HCT116 (cell line): ENCODE measurements at regions of chr3 and their contacts with region 1.

Region 1: GRCh38 chr3:142595951-142596725 is at the start of gene PLS1:
- DNase-seq: peak; percentile 86
- ATAC-seq: peak; percentile 88
- H3K4me3 ChIP-seq: peak within 1 kb of the TSS; percentile 64 to 75
- H3K27ac ChIP-seq: peak within 1 kb of the TSS; percentile 78
- H3K4me1 ChIP-seq: peaks cover 20 to 28% of the 10 kb centered on the region in 2 experiments
- H3K27me3 ChIP-seq: no peaks in the 10 kb centered on the region
- CTCF ChIP-seq: no peak
- POLR2A ChIP-seq: peak; percentile 94
- RAD21 ChIP-seq: 0 out of 2 replicates have a peak, but pooled peaks have one; percentile 6
- total RNA-seq, gene PLS1: 38.8 TPM

Region 2: DNA sequence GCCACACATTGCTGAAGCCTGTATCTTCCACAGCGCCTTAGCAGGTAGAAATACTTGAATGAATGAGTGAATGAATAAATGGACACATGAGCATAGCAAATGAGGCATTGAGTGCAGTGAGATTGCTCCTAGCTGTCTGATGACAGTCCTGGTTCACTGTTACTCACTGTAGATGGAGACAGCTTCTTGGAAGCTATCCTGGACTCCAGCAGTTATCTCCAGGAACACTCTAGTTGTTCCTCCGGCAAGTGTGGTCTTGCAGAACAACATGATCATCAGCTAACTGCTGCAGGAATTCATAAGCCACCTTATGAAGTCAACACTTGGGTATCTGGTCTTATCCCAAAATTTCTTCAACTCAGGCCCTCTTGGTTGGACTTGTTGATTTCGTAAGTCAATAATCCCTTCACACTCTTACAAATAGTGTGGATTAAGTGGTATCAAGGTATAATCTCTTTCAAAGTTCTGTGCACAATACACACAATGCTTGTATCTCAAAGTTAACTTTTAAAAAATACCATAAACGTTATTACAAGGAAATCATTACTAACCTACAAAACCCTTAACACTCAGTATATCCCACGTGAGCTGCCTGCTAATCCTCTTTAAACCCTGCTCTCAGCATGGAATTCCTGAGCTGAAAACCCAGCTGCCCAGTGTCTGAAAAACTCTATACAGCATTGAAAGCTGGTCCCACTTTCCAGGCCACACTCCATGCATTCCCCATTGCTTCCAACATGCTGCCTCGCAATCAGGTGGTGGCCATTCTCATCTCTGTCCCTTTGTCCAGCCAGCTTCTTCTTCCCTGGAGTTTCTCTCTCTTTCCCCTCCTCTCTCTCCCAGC is 1242.3 kb before region 1 on chr3:
- CTCF ChIA-PET with region 1: no interaction called
- POLR2A ChIA-PET with region 1: no interaction called
- RAD21 ChIA-PET with region 1: no interaction called
- intact Hi-C with region 1: no loop called
- DNase-seq: no peak
- ATAC-seq: no peak
- H3K4me3 ChIP-seq: no peak overlapping the region
- H3K27ac ChIP-seq: no peak overlapping the region
- H3K4me1 ChIP-seq: no peaks in the 10 kb centered on the region
- H3K27me3 ChIP-seq: no peaks in the 10 kb centered on the region
- CTCF ChIP-seq: no peak
- POLR2A ChIP-seq: no peak
- RAD21 ChIP-seq: no peak

Region 3: DNA sequence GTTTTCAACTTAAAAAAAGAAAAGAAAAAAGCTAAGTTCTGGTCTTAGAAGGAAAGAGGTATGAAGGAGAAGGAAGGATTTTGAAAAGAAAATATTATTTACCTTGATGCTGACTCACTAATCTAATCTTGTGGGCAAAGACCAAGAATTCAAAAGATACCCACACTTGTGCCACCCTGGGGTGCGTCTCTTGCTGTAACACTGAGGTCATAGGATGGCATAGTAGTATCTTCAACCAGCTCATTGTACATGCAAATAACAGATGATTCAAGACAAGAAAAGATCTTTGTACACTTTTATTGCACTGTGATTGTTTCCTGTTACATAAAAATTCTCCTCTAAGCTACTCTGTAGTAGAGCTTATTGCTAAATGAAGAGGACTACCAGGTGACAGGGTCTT is 17.4 kb after region 1 on chr3:
- CTCF ChIA-PET with region 1: no interaction called
- POLR2A ChIA-PET with region 1: no interaction called
- RAD21 ChIA-PET with region 1: no interaction called
- intact Hi-C with region 1: no loop called
- DNase-seq: no peak
- ATAC-seq: no peak
- H3K4me3 ChIP-seq: no peak overlapping the region
- H3K27ac ChIP-seq: no peak overlapping the region
- H3K4me1 ChIP-seq: peaks cover 0 to 2% of the 10 kb centered on the region in 2 experiments; a peak in 3 of 4 replicates
- H3K27me3 ChIP-seq: no peaks in the 10 kb centered on the region
- CTCF ChIP-seq: no peak
- POLR2A ChIP-seq: no peak
- RAD21 ChIP-seq: no peak

Region 4: DNA sequence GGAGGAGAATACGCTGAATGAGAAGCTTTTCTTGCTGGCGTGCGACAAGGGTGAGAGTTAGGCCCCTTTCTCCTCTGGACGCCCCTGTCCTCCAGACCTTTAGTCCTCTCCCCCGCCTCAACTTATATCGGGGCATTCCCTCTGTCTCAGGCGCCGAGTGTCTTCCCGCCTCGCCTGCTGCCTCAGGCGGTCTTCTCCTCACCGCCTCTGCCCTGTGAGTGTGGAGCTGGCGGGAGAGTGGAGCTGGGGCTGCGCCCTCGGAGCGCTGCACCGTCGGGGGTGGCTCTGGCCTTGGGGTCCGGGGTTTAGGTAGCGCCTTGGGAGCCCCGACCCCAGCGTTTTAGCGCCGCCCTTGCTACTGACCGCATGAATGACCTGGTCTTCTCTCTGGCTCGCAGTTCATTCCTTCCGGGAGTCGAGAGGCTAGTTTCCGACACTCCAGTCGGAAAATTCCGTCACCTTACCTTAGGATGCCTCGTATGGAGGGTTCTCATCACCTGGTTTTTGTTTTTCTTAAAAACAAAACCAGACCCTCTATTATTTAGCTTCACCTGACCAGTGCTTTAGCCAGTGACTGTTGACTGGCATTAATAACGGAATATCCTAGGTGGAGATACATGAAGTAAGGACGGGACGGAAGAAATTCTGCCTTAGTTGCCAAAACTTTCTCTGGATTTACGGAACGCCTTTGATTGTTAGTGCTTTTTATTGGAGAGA is 128.7 kb after region 1 on chr3:
- CTCF ChIA-PET with region 1: no interaction called
- POLR2A ChIA-PET with region 1: no interaction called
- RAD21 ChIA-PET with region 1: no interaction called
- intact Hi-C with region 1: loop called (anchors 5 kb)
- DNase-seq: peak; percentile 13
- ATAC-seq: peak; percentile 47
- H3K4me3 ChIP-seq: peak overlapping the region; percentile 52 to 78
- H3K27ac ChIP-seq: peak overlapping the region; percentile 92
- H3K4me1 ChIP-seq: peaks cover 3 to 16% of the 10 kb centered on the region in 2 experiments; a peak in 2 of 4 replicates
- H3K27me3 ChIP-seq: no peaks in the 10 kb centered on the region
- CTCF ChIP-seq: no peak
- POLR2A ChIP-seq: no peak
- RAD21 ChIP-seq: no peak

Region 5: DNA sequence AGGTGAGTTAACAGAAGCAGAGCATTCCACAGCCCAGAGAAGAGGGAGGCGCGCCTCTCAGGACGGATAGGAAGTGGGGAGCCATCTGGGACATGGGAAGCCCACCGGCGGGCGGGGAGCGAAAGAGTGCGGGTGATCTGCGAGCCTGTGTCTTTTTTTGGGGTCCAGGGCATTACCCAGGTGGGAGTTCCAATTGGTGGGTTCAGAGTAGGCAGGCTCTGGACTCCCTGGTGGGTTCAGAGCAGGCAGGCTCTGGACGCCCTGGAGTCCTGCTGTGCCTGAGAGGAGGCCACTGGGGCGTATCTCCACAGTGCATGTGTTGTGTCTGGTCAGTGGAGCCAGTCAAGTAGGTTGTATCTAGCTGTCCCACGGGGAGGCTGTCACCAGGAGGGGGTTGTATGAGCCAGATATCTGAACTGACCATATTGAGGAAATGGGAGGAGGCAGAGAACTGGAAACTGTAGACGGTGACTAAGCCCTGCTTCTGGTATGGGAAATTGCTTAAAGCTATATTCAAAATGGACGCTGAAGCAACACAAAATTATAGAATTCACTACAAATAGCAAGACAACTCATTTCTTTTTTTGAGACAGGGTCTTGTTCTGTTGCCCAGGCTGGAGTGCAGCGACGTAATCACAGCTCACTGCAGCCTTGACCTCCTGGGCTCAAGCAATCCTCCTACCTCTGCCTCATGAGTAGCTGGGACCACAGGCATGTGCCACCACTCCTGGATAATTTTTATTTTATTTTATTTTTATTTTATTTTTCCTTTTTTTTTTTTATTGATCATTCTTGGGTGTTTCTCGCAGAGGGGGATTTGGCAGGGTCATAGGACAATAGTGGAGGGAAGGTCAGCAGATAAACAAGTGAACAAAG is 489.0 kb after region 1 on chr3:
- CTCF ChIA-PET with region 1: no interaction called
- POLR2A ChIA-PET with region 1: no interaction called
- RAD21 ChIA-PET with region 1: no interaction called
- intact Hi-C with region 1: no loop called
- DNase-seq: no peak
- ATAC-seq: 0 out of 2 replicates have a peak, but pooled peaks have one; percentile 34
- H3K4me3 ChIP-seq: no peak overlapping the region
- H3K27ac ChIP-seq: no peak overlapping the region
- H3K4me1 ChIP-seq: no peaks in the 10 kb centered on the region
- H3K27me3 ChIP-seq: no peaks in the 10 kb centered on the region
- CTCF ChIP-seq: no peak
- POLR2A ChIP-seq: no peak
- RAD21 ChIP-seq: no peak